ENCODE measurements at regions of chr10 and their contacts with region 1.

Region 1: GRCh38 chr10:15719899-15720634 is at the start of gene ITGA8:
- DNase-seq: no peak
- H3K4me3 ChIP-seq: peak within 1 kb of the TSS; percentile 30 to 67 (median 40)
- H3K27ac ChIP-seq: no peak within 1 kb of the TSS
- H3K4me1 ChIP-seq: peaks cover 0 to 5% (median 1%) of the 10 kb centered on the region in 4 experiments; a peak in 3 of 7 replicates
- H3K27me3 ChIP-seq: peaks cover 10 to 32% (median 25%) of the 10 kb centered on the region in 4 experiments
- CTCF ChIP-seq: peak; percentile 36 to 72 (median 57)
- EP300 ChIP-seq: no peak
- POLR2A ChIP-seq: no peak
- RAD21 ChIP-seq: peak; percentile 33 to 38; a peak in 2 of 4 replicates
- total RNA-seq, gene ITGA8: not detected in 2 replicates

Region 2: DNA sequence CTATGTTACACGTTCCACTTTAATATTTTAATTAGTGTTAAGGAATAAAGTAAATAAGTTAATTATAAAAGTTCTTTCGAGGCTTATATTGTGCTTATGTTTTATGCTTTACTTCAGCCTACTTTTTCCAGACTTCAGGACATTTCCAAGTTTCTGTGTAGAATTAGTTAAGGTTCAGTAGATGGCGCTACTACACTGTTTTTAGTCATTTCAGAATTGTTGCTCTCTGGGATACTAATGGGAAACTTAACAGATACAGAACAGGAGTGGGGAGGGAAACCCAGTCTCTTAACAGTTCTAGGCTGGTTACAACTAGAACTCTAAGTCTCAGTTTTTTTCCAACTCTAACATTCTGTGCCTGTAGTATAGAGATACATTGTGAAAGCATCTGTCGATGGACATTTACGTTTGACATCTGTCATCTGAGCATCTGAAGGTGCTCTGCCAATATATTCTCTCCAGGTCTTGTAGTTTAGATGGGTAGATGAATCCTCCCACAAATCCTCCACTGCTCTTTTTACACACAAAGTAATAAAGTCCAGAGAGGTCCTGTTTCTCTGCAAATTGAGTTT is 292.1 kb before region 1 on chr10:
- CTCF ChIA-PET with region 1: interaction called, 37 read pairs
- POLR2A ChIA-PET with region 1: interaction called, 3 read pairs
- DNase-seq: no peak
- H3K4me3 ChIP-seq: no peak overlapping the region
- H3K27ac ChIP-seq: no peak overlapping the region
- H3K4me1 ChIP-seq: no peaks in the 10 kb centered on the region
- H3K27me3 ChIP-seq: no peaks in the 10 kb centered on the region
- CTCF ChIP-seq: peak in 2 of 3 experiments; percentile 57 to 58; a peak in 2 of 4 replicates
- EP300 ChIP-seq: no peak
- POLR2A ChIP-seq: no peak
- RAD21 ChIP-seq: peak; percentile 81 to 85

Region 3: GRCh38 chr10:15439341-15439842 is 280.7 kb before region 1 on chr10:
- CTCF ChIA-PET with region 1: interaction called, 15 read pairs
- POLR2A ChIA-PET with region 1: interaction called, 3 read pairs
- DNase-seq: no peak
- H3K4me3 ChIP-seq: no peak overlapping the region
- H3K27ac ChIP-seq: no peak overlapping the region
- H3K4me1 ChIP-seq: peaks cover 0 to 3% (median 0%) of the 10 kb centered on the region in 4 experiments; a peak in 1 of 7 replicates
- H3K27me3 ChIP-seq: peaks cover 0 to 5% (median 3%) of the 10 kb centered on the region in 4 experiments; a peak in 2 of 7 replicates
- CTCF ChIP-seq: peak in 2 of 3 experiments; percentile 61 to 69; a peak in 3 of 4 replicates
- EP300 ChIP-seq: no peak
- POLR2A ChIP-seq: no peak
- RAD21 ChIP-seq: peak; percentile 22 to 24; a peak in 1 of 4 replicates

Region 4: DNA sequence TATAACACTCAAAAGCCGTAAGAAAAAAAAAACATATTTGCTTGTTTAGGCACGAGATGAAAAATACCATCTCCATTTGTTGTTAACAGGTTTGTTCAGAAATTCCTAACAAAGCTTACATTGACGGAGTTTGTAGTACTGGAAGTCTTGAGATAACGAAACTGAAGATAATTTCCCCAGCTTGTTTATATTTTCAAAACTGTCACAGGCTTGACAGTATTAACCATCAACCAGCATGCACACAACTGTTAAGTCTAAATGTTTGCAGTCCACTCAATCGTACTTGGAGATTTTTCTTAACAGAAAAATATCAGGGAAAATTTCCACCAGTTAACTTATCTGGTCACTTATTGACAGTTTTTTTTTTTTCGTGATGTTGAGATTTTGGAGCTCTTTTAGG is 68.9 kb before region 1 on chr10:
- CTCF ChIA-PET with region 1: interaction called, 12 read pairs
- POLR2A ChIA-PET with region 1: no interaction called
- DNase-seq: no peak
- H3K4me3 ChIP-seq: no peak overlapping the region
- H3K27ac ChIP-seq: no peak overlapping the region
- H3K4me1 ChIP-seq: no peaks in the 10 kb centered on the region
- H3K27me3 ChIP-seq: no peaks in the 10 kb centered on the region
- CTCF ChIP-seq: no peak
- EP300 ChIP-seq: no peak
- POLR2A ChIP-seq: no peak
- RAD21 ChIP-seq: no peak

Region 5: GRCh38 chr10:15738270-15738925 is 18.3 kb after region 1 on chr10:
- CTCF ChIA-PET with region 1: interaction called, 15 read pairs
- POLR2A ChIA-PET with region 1: no interaction called
- DNase-seq: no peak
- H3K4me3 ChIP-seq: no peak overlapping the region
- H3K27ac ChIP-seq: no peak overlapping the region
- H3K4me1 ChIP-seq: no peaks in the 10 kb centered on the region
- H3K27me3 ChIP-seq: no peaks in the 10 kb centered on the region
- CTCF ChIP-seq: no peak
- EP300 ChIP-seq: no peak
- POLR2A ChIP-seq: no peak
- RAD21 ChIP-seq: no peak

Measured in H1 (cell line).